ENCODE measurements at regions of chrX and their contacts with region 1.

Region 1: GRCh38 chrX:118644378-118644777 is 83.0 kb upstream of the IL13RA1 start:
- DNase-seq: no peak
- H3K4me3 ChIP-seq: no peak overlapping the region
- CTCF ChIP-seq: no peak
- POLR2A ChIP-seq: no peak

Region 2: GRCh38 chrX:118614150-118614549 is 30.2 kb before region 1 on chrX:
- intact Hi-C with region 1: no loop called
- DNase-seq: no peak
- H3K4me3 ChIP-seq: no peak overlapping the region
- CTCF ChIP-seq: no peak
- POLR2A ChIP-seq: no peak

Region 3: DNA sequence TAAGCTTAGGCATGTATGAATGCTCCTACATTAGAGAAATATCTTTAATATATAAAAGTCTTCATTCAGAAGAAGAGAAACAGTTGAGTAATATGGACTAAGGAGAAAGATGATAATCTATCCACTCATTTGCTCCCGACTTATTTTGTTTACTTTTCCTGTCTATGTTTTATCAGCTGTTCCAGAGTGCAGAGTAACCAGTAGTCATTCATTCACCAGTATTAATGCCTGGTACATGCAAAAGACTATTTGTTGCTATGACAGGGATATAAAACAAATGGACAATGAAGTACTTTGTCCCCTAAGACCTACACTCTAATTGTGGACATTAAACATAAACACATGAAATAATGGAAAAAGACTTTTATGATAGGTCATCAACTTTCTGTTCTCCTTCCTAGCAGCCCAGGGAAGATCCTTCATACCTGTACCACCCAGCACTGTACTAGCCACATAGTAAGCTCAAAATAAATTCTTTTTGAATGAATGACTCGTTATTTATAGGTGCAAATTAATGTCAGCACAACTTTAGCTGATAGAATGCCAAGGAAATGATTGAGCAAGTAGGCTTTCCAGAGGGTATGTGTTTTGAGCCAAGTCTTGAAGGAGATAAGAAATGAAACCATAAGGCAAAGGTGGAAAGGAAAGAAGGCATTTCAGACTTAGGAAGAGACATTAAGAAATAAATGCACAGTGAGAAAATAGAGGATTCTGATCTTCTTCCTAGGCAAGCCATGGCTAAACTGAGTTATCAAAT is 38.1 kb after region 1 on chrX:
- intact Hi-C with region 1: no loop called
- DNase-seq: no peak
- H3K4me3 ChIP-seq: no peak overlapping the region
- CTCF ChIP-seq: no peak
- POLR2A ChIP-seq: no peak

Region 4: DNA sequence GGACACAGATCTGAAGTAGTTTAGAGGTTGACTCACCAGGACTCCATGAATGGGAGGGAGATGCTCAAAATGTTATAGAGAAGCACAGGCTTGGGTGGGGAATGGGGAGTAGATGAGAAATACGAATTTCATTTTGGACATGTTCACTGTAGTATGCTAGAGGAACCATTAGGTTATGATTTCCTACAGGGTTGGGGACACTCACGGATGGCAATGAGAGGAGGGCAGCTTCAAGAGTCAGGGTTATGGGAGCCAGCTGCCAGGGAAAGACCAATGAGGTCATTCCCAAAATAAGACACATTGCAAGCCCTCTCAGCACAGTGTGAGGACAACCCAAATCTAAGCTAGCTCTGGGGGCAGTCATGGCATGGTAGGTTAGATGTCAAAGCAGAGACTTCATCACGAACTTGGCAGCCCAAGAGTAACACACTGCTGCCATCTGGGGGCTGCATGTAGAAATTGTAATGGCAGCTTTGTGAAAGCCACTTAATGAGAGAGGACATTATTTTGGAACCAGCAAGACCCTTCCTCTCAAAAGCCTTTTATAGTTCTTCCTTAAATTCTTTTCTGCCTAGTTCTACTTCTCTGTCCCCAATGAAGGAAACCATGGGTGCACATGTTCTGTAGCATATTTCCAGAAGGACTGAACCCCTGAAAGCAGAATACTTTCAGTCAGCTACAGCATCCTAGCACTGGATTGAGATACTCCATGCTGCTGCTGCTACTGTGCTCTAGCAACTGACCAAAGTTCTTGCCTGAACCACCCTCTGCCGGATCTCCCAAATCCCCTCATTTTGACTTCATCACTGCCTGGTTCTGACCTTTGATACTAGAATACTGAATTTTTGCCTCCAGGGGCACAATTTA is 163.0 kb after region 1 on chrX:
- intact Hi-C with region 1: loop called (anchors 10 kb)
- DNase-seq: peak in 1 of 2 donors; percentile 16
- H3K4me3 ChIP-seq: no peak overlapping the region
- CTCF ChIP-seq: no peak
- POLR2A ChIP-seq: no peak